PC-3 (cell line): ENCODE measurements at regions of chr5 and their contacts with region 1.

Region 1: DNA sequence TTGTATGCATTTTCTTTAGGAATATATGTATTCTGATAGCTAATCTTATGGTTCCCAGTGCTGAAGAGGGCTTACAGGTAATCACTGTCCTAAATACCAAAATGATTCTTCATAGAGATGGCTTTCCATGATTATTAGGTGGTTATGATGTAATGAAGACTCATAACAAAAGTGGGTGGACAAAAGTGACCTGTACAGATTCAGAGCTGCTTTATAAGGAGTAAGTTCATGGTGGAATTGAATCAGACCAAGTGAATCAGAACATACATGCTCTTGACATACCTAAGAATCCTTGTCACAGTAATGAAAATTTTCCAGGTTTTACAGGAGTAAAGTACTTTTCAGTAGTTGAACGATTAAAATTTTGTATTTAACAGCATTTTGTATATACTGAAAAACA is 105.6 kb downstream of the NIPBL start:
- DNase-seq: peak; percentile 62
- ATAC-seq: no peak
- H3K4me3 ChIP-seq: no peak overlapping the region
- H3K27ac ChIP-seq: no peak overlapping the region
- H3K4me1 ChIP-seq: peaks cover 12% of the 10 kb centered on the region
- H3K27me3 ChIP-seq: no peaks in the 10 kb centered on the region
- CTCF ChIP-seq: no peak

Region 2: DNA sequence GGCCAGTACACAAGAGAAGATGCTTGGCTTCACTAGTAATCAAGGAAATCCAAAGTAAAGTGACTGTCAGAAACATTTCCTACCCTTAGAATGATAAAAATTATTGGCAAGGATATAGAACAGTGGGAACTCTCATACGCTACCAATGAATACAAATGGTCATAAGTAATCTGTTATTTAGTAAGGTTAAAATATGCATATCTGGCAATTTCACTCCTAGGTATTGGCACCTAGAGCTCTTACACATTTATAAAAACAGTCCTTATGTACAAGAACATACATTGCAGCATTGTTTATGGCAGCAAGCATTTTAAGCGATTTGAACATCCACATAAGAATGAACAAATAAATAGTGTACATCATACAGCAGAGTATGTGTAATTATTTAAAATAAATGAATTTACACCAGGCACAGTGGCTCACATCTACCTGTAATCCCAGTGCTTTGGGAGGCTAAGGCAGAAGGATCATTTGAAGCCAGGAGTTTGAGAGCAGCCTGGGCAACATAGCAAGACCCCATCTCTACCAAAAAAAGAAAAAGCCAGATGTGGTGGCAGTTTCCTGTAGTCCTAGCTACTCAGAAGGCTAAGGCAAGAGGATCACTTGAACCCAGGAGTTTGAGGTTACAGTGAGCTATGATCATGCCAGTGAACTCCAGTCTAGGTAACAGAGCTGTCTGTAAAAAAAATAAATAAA is 12.3 kb before region 1 on chr5:
- CTCF ChIA-PET with region 1: no interaction called
- POLR2A ChIA-PET with region 1: no interaction called
- intact Hi-C with region 1: loop called (anchors 2 kb)
- DNase-seq: no peak
- ATAC-seq: no peak
- H3K4me3 ChIP-seq: no peak overlapping the region
- H3K27ac ChIP-seq: no peak overlapping the region
- H3K4me1 ChIP-seq: no peaks in the 10 kb centered on the region
- H3K27me3 ChIP-seq: no peaks in the 10 kb centered on the region
- CTCF ChIP-seq: no peak

Region 3: GRCh38 chr5:37043688-37044087 is 61.5 kb after region 1 on chr5:
- CTCF ChIA-PET with region 1: no interaction called
- POLR2A ChIA-PET with region 1: no interaction called
- intact Hi-C with region 1: no loop called
- DNase-seq: peak; percentile 37
- ATAC-seq: peak; percentile 74
- H3K4me3 ChIP-seq: no peak overlapping the region
- H3K27ac ChIP-seq: no peak overlapping the region
- H3K4me1 ChIP-seq: no peaks in the 10 kb centered on the region
- H3K27me3 ChIP-seq: no peaks in the 10 kb centered on the region
- CTCF ChIP-seq: peak; percentile 46

Region 4: DNA sequence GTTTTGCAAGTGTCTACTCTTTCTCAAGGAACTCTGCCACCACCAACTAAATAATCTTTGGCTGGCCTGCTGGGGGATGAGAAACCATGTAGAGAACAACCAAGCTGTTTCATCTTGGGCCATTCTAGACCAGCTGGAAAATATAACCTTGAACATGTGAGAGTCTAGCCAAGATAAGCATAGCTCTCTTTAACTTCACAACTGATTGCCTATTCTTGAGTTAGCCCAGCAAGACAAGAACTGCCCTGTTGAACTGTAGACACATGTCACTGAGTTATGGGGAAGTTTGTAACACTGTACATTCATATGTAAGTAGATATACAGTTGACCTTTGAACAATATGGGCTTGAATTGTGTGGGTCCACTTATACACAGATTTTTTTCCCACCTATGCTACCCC is 344.4 kb after region 1 on chr5:
- CTCF ChIA-PET with region 1: no interaction called
- POLR2A ChIA-PET with region 1: no interaction called
- intact Hi-C with region 1: no loop called
- DNase-seq: no peak
- ATAC-seq: no peak
- H3K4me3 ChIP-seq: no peak overlapping the region
- H3K27ac ChIP-seq: no peak overlapping the region
- H3K4me1 ChIP-seq: no peaks in the 10 kb centered on the region
- H3K27me3 ChIP-seq: no peaks in the 10 kb centered on the region
- CTCF ChIP-seq: no peak

Region 5: GRCh38 chr5:37506722-37507121 is 524.6 kb after region 1 on chr5:
- CTCF ChIA-PET with region 1: no interaction called
- POLR2A ChIA-PET with region 1: no interaction called
- intact Hi-C with region 1: no loop called
- DNase-seq: no peak
- ATAC-seq: no peak
- H3K4me3 ChIP-seq: no peak overlapping the region
- H3K27ac ChIP-seq: no peak overlapping the region
- H3K4me1 ChIP-seq: no peaks in the 10 kb centered on the region
- H3K27me3 ChIP-seq: no peaks in the 10 kb centered on the region
- CTCF ChIP-seq: no peak